ENCODE measurements at regions of chr11 and their contacts with region 1.

Region 1: DNA sequence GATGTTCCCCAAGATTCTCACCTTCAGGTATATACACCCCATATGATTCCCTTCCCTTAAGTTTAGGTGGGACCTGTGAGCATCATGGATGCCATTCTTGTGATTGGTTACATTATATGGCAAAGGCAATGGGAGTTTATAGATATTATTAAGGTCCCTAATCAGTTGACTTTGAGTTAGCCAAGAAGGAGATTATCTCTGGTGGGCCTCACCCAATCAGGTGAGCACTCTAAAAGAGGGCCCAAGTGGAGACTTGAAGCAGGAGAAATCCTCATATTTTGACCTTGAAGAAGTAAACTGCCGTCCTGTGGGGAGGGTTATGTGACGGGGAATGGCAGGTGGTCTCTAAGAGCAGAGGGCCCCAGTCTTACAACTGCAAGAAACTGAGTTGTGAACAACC is 94.2 kb downstream of the HSD17B12 start:
- DNase-seq: no peak
- ATAC-seq: no peak

Region 2: DNA sequence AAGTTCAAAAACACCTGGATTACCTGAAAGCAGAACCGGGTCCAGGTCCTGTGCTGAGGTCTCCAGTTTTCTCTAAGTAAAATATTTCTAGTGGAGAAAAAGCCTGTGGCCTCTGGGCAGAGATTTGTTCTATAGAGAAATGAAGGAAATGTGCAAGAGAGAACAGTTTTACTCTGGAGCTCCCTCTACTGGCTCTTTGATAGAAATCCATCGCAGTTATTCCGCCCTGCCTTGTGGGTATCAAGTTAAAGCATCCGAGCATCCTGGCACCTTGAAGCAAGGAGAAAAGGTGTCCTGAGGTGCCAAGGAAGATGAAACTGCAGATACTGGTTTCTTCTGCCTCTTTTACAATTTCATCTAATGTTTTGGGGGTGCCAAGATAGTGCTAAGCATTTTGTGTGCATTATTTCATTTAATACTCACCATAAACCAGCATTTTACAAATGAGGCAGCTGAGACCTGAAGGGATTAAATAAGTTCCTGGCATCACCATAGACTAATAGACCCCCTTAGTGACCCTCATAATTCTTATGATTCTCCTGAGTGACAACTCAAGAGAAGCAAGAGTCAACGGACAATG is 207.3 kb before region 1 on chr11:
- intact Hi-C with region 1: no loop called
- DNase-seq: no peak
- ATAC-seq: no peak

Region 3: DNA sequence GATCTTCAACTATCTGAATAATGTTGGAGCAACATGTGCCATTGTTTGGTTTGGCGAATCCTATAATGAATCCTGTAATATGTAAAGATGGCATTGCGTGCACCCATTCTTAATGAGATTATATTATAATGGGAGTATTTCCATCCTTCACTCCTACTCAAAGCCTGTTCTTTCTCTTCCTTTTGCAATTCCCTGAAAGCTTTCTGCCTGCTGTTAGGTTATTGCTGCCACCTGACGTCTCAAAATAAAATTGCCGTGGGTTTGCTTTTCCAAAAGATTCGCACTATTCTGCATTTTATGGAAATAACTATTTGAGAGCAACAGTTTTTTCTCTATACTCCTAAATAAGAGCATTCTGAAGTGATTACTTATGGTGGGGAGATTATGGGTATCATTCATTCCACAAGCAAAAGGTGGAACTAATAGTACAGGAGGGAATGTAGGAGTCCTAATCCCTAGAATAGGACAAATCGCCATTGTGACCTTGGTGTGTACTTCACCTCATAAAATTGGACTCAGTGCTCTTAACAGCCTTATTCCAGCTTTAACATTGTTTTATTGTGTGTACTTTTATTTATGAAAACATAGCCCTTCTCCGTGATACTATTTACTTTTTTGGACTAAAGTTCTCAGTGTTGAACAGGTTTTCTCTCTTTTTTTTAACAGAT is 36.3 kb after region 1 on chr11:
- intact Hi-C with region 1: loop called (anchors 1 kb)
- DNase-seq: no peak
- ATAC-seq: no peak

Measured in sciatic nerve (tissue), 2 donors.